ENCODE measurements at regions of chr10 and their contacts with region 1.

Region 1: GRCh38 chr10:91643700-91644099 is 10.8 kb upstream of the PPP1R3C start:
- DNase-seq: peak; percentile 56
- H3K4me3 Mint-ChIP-seq: no peak overlapping the region
- H3K27ac Mint-ChIP-seq: no peak overlapping the region
- H3K4me1 Mint-ChIP-seq: peaks cover 5% of the 10 kb centered on the region
- H3K27me3 Mint-ChIP-seq: peaks cover 64% of the 10 kb centered on the region
- CTCF ChIP-seq: no peak

Region 2: GRCh38 chr10:91694170-91694794 is 50.6 kb after region 1 on chr10:
- CTCF ChIA-PET with region 1: interaction called, 6 read pairs
- intact Hi-C with region 1: loop called (anchors 1 kb)
- DNase-seq: peak; percentile 25
- H3K4me3 Mint-ChIP-seq: no peak overlapping the region
- H3K27ac Mint-ChIP-seq: no peak overlapping the region
- H3K4me1 Mint-ChIP-seq: peaks cover 13% of the 10 kb centered on the region
- H3K27me3 Mint-ChIP-seq: no peaks in the 10 kb centered on the region
- CTCF ChIP-seq: peak; percentile 21

Region 3: DNA sequence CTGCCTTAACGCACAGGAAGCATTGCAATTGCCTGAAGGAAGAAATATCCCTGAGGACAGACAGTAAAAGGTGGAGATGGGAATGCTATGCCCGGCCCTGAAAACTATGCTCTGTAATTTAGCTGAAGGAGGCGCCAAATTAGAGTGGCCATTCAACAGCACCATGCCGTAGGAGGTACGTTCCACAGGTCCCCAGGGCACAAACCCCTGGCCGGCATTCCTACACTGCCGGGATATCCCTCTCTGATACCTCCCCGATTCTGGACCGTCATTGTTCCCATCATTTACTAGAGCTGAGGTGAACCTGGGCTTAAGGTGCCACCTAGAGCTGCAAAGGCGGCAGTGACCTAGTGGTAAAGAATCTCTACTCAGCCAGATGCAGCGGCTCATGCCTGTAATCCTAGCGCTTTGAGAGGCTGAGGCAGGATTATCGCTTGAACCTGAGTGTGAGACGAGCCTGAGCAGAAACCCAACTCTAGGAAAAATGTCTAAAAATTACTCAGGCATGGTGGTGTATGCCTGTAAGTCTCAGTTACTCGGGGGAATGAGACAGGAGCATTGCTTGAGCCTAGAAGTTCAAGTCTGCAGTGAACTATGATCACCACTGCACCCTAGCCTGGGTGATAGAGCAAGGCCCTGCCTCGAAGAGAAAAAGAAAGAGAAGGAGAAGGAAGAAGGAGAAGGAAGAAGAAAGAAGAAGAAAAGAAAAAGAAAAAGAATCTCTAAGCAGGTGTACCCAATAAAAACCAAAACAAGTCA is 101.6 kb after region 1 on chr10:
- CTCF ChIA-PET with region 1: interaction called, 25 read pairs
- intact Hi-C with region 1: loop called (anchors 1 kb)
- DNase-seq: peak; percentile 44
- H3K4me3 Mint-ChIP-seq: no peak overlapping the region
- H3K27ac Mint-ChIP-seq: no peak overlapping the region
- H3K4me1 Mint-ChIP-seq: no peaks in the 10 kb centered on the region
- H3K27me3 Mint-ChIP-seq: peaks cover 18% of the 10 kb centered on the region
- CTCF ChIP-seq: peak; percentile 20

Region 4: GRCh38 chr10:91908337-91909116 is 264.8 kb after region 1 on chr10:
- CTCF ChIA-PET with region 1: interaction called, 4 read pairs
- intact Hi-C with region 1: loop called (anchors 5 kb)
- DNase-seq: peak; percentile 76
- H3K4me3 Mint-ChIP-seq: peak overlapping the region; percentile 79
- H3K27ac Mint-ChIP-seq: no peak overlapping the region
- H3K4me1 Mint-ChIP-seq: peaks cover 20% of the 10 kb centered on the region
- H3K27me3 Mint-ChIP-seq: peaks cover 10% of the 10 kb centered on the region
- CTCF ChIP-seq: no peak

Measured in Calu3 (cell line).